Heart right ventricle (tissue), 16 donors: ENCODE measurements at regions of chr12 and their contacts with region 1.

Region 1: DNA sequence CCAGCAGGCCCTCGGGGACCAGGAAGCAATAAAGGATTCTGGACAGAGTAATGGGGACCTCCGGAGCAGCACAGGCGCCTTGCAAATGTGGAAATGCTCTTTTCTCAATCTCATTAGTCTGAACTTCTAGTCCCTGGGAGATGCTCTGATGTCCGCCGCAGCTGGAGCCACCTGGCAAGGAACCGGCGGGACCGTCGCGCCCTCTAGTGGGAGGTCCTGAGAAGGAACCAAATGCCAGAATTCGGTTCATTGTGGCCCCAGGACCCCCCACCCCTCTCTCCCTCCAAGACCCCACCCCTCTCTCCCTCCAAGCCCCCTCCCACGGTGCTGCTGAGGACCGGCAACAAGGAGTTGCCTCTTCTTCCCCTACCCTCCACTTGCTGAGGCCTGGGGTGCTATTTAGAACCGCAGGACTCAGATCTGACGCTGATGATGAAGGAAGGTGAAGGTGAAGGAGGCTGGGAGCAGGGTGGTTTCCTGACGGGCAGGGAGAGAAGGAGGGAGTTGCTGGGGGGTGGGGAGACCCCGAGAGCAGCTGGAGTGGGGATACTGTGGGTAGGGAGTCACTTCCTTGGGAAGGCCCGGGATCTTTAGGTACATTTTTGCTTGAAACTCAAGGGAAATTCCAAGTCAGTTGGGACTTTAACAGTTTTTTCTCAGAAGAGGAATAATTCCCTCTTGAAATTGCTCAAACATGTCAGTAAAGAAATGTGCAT is 42.5 kb downstream of the SMIM41 start:
- DNase-seq: peak; percentile 65 to 77
- ATAC-seq: peak in 7 of 8 donors; percentile 13 to 54 (median 28)
- H3K4me3 ChIP-seq: no peak overlapping the region
- H3K27ac ChIP-seq: no peak overlapping the region
- H3K4me1 ChIP-seq: peaks cover 14 to 35% (median 25%) of the 10 kb centered on the region in 9 donors
- H3K27me3 ChIP-seq: peaks cover 0 to 29% (median 14%) of the 10 kb centered on the region in 7 donors
- CTCF ChIP-seq: peak; percentile 67 to 85 (median 81)

Region 2: GRCh38 chr12:51980051-51980808 is 141.8 kb before region 1 on chr12:
- intact Hi-C with region 1: no loop called
- DNase-seq: peak; percentile 40 to 60
- ATAC-seq: peak; percentile 86 to 95 (median 92)
- H3K4me3 ChIP-seq: no peak overlapping the region
- H3K27ac ChIP-seq: no peak overlapping the region
- H3K4me1 ChIP-seq: peaks cover 0 to 40% (median 0%) of the 10 kb centered on the region in 9 donors
- H3K27me3 ChIP-seq: no peaks in the 10 kb centered on the region
- CTCF ChIP-seq: peak; percentile 95 to 99 (median 97)

Region 3: GRCh38 chr12:51994959-51995358 is 127.0 kb before region 1 on chr12:
- intact Hi-C with region 1: loop called in 7 of 10 experiments (anchors 5 to 10 kb)
- DNase-seq: no peak
- ATAC-seq: no peak
- H3K4me3 ChIP-seq: no peak overlapping the region
- H3K27ac ChIP-seq: no peak overlapping the region
- H3K4me1 ChIP-seq: peaks cover 0 to 6% (median 0%) of the 10 kb centered on the region in 9 donors
- H3K27me3 ChIP-seq: no peaks in the 10 kb centered on the region
- CTCF ChIP-seq: no peak

Region 4: DNA sequence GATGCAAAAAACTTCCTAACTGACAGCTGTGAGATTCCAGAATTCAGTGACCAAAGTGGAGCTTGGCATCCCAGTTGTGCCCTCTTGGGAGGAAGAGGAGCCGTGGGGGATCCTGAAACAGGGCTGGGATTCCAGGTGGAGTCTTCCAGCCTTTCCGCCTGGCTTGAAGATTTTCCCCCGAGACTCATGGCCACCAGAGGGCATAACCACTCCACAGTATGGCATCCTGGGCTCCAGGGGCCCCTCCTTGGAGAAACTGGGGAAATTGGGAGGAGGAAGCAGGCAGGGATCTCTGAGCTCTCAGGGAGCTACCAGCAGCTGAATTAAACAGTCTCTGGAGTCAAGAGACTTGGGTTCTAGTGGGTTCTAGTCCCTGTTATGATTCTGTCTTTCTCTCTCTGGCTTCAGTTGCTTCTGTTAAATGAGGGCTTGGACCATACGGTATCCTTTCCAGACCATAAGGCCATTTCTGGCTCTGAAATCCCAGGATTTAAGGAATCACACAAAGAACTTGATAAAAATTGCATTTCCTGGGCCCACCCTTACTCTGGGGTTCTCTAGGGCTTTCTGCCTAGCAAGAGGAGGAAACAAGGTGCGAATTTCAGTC is 117.8 kb before region 1 on chr12:
- intact Hi-C with region 1: loop called in 7 of 10 experiments (anchors 5 to 10 kb)
- DNase-seq: peak; percentile 40 to 63
- ATAC-seq: peak in 5 of 8 donors; percentile 12 to 33 (median 25)
- H3K4me3 ChIP-seq: no peak overlapping the region
- H3K27ac ChIP-seq: peak overlapping the region in 2 of 10 donors; percentile 25 to 41
- H3K4me1 ChIP-seq: peaks cover 4 to 46% (median 25%) of the 10 kb centered on the region in 9 donors
- H3K27me3 ChIP-seq: peaks cover 0 to 30% (median 11%) of the 10 kb centered on the region in 7 donors
- CTCF ChIP-seq: peak; percentile 58 to 78 (median 73)

Region 5: DNA sequence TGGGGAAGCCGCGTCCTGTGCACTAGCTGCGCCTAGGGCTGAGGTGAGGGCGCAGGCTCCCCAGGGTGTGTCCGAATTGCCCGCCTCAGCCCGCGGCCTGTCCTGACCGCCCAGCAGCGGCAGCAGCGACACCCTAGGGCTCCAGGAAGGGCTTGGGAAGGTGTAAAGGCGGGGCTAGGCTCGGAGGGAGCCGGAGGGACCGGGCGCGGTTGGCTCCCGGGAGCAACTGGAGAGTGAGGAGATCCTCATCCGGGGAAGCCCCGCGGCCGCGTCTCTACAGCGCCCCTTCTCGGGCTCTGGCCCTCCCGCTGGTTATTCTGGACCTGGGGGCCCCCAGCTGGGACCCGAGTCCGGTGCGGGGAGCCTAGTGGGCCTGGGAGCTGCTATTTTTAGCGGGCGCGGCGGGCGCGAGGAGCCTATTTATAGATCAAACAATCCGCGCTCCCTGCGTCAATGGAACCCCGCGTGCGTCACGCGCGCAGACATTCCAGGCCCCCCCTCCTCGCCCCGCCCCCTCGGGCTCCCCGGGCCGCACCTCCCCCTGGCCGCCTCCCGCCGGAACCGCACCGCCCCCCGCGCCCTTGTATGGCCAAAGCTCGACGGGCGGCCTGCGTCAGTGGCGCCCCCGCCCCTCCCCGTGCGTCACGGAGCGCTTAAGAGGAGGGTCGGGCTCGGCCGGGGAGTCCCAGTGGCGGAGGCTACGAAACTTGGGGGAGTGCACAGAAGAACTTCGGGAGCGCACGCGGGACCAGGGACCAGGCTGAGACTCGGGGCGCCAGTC is 71.0 kb before region 1 on chr12 and contains the start of gene NR4A1:
- intact Hi-C with region 1: loop called in 1 of 10 experiments (anchors 5 kb)
- DNase-seq: peak; percentile 99
- ATAC-seq: peak; percentile 70 to 92 (median 86)
- H3K4me3 ChIP-seq: peak within 1 kb of the TSS; percentile 38 to 77 (median 66)
- H3K27ac ChIP-seq: peak within 1 kb of the TSS; percentile 88 to 98 (median 96)
- H3K4me1 ChIP-seq: peaks cover 31 to 87% (median 60%) of the 10 kb centered on the region in 9 donors
- H3K27me3 ChIP-seq: peaks cover 0 to 5% (median 0%) of the 10 kb centered on the region in 7 donors
- CTCF ChIP-seq: peak in 8 of 9 donors; percentile 9 to 69 (median 34)
- total RNA-seq, gene NR4A1: 34.6 to 588 (median 105) TPM

Region 6: GRCh38 chr12:52082988-52083637 is 38.9 kb before region 1 on chr12:
- intact Hi-C with region 1: loop called in 1 of 10 experiments (anchors 5 kb)
- DNase-seq: peak; percentile 68 to 72
- ATAC-seq: peak; percentile 25 to 70 (median 50)
- H3K4me3 ChIP-seq: no peak overlapping the region
- H3K27ac ChIP-seq: peak overlapping the region in 9 of 10 donors; percentile 25 to 86 (median 74)
- H3K4me1 ChIP-seq: peaks cover 14 to 38% (median 34%) of the 10 kb centered on the region in 9 donors
- H3K27me3 ChIP-seq: peaks cover 0 to 16% (median 0%) of the 10 kb centered on the region in 7 donors
- CTCF ChIP-seq: peak; percentile 92 to 99 (median 97)